ENCODE measurements at regions of chr5 and their contacts with region 1.

Region 1: GRCh38 chr5:96903300-96903699 is 27.0 kb downstream of the ERAP2 start:
- DNase-seq: no peak
- ATAC-seq: no peak
- H3K4me3 ChIP-seq: no peak overlapping the region
- H3K27ac ChIP-seq: no peak overlapping the region
- H3K4me1 ChIP-seq: peaks cover 0 to 3% of the 10 kb centered on the region in 2 donors
- H3K27me3 ChIP-seq: no peaks in the 10 kb centered on the region
- CTCF ChIP-seq: no peak
- POLR2A ChIP-seq: no peak

Region 2: DNA sequence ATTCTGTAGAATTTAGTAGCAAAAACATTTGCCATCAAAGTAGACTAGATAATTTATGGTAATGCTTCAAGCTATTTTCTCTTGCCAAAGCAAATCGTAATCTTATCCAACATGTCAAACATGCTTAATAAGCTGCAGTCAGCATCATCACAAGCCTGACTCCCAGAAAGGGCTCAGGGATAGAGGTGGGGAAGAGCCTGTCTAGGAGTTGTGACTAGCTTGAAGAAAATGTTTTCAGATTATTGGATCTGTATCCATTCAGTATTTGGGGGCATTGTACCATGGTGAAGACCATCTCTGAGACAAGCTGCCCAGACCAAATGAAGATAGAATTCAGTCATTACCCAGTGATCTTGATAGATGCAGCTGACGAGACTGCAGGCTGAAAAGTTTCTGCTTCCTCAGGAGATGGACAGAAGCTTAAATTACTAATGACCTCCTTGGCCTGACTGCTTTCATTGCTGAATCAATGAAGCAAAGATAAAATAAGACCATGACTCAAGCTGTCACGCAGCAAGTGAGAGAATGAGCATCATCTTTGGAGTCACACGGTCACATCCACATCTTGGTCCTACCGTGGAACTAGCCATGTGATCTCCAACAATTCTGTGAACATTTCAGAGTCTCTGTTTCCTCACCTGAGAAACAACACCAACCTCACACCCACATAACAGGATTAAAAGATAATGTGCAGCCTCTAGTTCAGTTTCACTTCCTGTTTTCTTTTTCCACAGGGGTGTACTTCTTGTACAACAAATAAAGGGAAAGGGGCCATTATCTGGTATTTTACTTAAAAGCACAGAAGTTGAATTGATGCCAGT is 17.6 kb before region 1 on chr5:
- in situ Hi-C with region 1: no loop called
- intact Hi-C with region 1: loop called (anchors 2 kb)
- DNase-seq: peak; percentile 69 to 70
- ATAC-seq: peak; percentile 99
- H3K4me3 ChIP-seq: no peak overlapping the region
- H3K27ac ChIP-seq: peak overlapping the region; percentile 72 to 76 (median 74)
- H3K4me1 ChIP-seq: peaks cover 13 to 15% of the 10 kb centered on the region in 2 donors
- H3K27me3 ChIP-seq: no peaks in the 10 kb centered on the region
- CTCF ChIP-seq: no peak
- POLR2A ChIP-seq: no peak